CD8-positive, alpha-beta memory T cell (primary cell): ENCODE measurements at regions of chr16 and their contacts with region 1.

Region 1: DNA sequence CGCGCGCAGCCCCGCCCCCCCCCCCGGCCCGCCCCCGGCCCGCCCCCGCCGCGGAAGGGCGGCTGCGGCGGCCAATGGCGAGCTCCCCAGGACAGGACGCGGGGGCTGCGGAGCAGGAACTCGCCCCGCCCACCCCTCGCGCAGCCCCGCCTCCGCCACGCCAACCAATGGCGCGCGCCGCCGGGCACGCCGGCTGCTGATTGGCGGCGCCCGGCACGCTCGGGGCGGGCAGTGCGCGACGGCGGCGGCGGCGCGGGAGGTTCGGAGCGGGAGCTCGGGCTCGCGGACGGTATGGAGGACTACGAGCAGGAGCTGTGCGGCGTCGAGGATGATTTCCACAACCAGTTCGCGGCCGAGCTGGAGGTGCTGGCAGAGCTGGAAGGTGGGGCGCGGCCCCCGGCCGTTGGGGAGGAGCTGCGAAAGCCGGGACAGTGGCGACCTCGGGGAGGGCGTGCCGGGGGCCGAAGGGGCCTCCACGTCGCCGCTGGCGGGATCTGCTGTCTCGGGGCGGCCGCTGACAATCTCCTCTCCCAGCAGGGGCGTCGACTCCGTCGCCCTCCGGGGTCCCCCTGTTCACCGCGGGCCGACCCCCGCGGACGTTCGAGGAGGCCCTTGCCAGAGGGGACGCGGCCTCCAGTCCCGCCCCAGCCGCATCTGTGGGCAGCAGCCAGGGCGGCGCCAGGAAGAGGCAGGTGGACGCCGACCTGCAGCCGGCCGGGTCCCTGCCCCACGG is at the start of gene CHTF18:
- DNase-seq: peak; percentile 89 to 94 (median 94)
- H3K4me3 ChIP-seq: peak within 1 kb of the TSS; percentile 67
- H3K4me3 Mint-ChIP-seq: peak within 1 kb of the TSS; percentile 81 to 90 (median 84)
- H3K27ac ChIP-seq: peak within 1 kb of the TSS; percentile 69
- H3K27ac Mint-ChIP-seq: peak within 1 kb of the TSS in 7 of 8 donors; percentile 57 to 85 (median 63)
- H3K4me1 ChIP-seq: peaks cover 4% of the 10 kb centered on the region
- H3K4me1 Mint-ChIP-seq: peaks cover 0 to 25% (median 5%) of the 10 kb centered on the region in 3 donors
- H3K27me3 ChIP-seq: no peaks in the 10 kb centered on the region
- H3K27me3 Mint-ChIP-seq: no peaks in the 10 kb centered on the region
- total RNA-seq, gene CHTF18: 121 to 122 TPM

Region 2: DNA sequence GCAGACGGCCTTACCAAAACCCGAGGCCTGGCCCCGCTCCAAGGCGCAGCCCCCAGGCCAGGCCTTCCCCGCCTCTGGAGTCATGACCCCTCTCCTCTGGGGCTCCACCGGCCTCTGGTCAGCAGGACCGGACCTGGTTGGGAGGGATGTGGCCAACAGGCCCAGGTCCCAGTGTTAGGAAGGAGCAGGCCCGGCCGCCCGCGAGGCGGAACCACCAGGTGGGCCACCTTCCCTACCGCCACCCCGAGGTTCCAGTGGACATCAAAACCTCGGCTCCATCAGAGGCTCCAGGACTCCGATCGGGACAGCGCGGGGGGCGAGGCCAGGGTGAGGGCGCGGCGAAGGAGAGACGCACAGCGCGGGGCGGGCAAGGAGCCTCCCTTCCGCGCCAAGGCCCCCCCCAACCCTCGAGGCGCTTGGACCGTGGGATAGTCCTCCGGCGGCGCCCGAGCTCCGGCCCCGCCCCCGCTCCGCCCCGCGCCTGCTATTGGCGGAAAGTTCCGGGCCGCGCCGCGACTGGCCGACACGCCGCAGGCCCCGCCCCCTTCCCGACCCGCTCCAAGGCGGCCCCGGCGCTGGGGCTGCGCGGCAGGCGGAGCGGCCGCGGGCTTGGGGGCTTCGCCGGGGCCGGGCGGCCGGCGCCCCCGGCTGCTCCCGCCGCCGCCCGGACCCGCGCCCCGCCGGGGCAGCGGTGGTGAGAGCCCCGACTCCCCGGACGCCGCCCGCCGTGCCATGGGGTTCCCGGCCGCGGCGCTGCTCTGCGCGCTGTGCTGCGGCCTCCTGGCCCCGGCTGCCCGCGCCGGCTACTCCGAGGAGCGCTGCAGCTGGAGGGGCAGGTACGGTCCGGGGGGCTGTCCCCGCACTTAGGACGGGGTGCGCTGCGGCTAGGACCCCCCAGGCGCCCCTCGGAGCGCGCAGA is 73.7 kb before region 1 on chr16 and contains the start of gene METRN:
- CTCF ChIA-PET with region 1: interaction called, 108 read pairs
- POLR2A ChIA-PET with region 1: interaction called, 16 read pairs
- DNase-seq: peak; percentile 84 to 90 (median 88)
- H3K4me3 ChIP-seq: no peak within 1 kb of the TSS
- H3K4me3 Mint-ChIP-seq: peak within 1 kb of the TSS; percentile 56 to 88 (median 58)
- H3K27ac ChIP-seq: no peak within 1 kb of the TSS
- H3K27ac Mint-ChIP-seq: peak within 1 kb of the TSS in 1 of 8 donors; percentile 54
- H3K4me1 ChIP-seq: peaks cover 14% of the 10 kb centered on the region
- H3K4me1 Mint-ChIP-seq: peaks cover 11 to 25% (median 16%) of the 10 kb centered on the region in 3 donors
- H3K27me3 ChIP-seq: peaks cover 13% of the 10 kb centered on the region
- H3K27me3 Mint-ChIP-seq: peaks cover 0 to 13% of the 10 kb centered on the region in 2 donors
- total RNA-seq, gene METRN: 34.8 to 38.2 TPM

Region 3: GRCh38 chr16:728131-728889 is 60.2 kb before region 1 on chr16:
- CTCF ChIA-PET with region 1: interaction called, 11 read pairs
- POLR2A ChIA-PET with region 1: interaction called, 3 read pairs
- DNase-seq: peak; percentile 57 to 81 (median 68)
- H3K4me3 ChIP-seq: no peak overlapping the region
- H3K4me3 Mint-ChIP-seq: peak overlapping the region in 6 of 7 donors; percentile 38 to 74 (median 52)
- H3K27ac ChIP-seq: peak overlapping the region; percentile 38
- H3K27ac Mint-ChIP-seq: peak overlapping the region in 3 of 8 donors; percentile 27 to 53 (median 52)
- H3K4me1 ChIP-seq: peaks cover 6% of the 10 kb centered on the region
- H3K4me1 Mint-ChIP-seq: peaks cover 0 to 16% (median 0%) of the 10 kb centered on the region in 3 donors
- H3K27me3 ChIP-seq: no peaks in the 10 kb centered on the region
- H3K27me3 Mint-ChIP-seq: no peaks in the 10 kb centered on the region

Region 4: GRCh38 chr16:877991-878784 is 89.6 kb after region 1 on chr16:
- CTCF ChIA-PET with region 1: no interaction called
- POLR2A ChIA-PET with region 1: no interaction called
- DNase-seq: peak in 1 of 5 donors; percentile 51
- H3K4me3 ChIP-seq: no peak overlapping the region
- H3K4me3 Mint-ChIP-seq: no peak overlapping the region
- H3K27ac ChIP-seq: no peak overlapping the region
- H3K27ac Mint-ChIP-seq: peak overlapping the region in 1 of 8 donors; percentile 70
- H3K4me1 ChIP-seq: no peaks in the 10 kb centered on the region
- H3K4me1 Mint-ChIP-seq: peaks cover 0 to 2% (median 0%) of the 10 kb centered on the region in 3 donors
- H3K27me3 ChIP-seq: no peaks in the 10 kb centered on the region
- H3K27me3 Mint-ChIP-seq: peaks cover 0 to 1% of the 10 kb centered on the region in 2 donors